IMR-90 (cell line): ENCODE measurements at regions of chr5 and their contacts with region 1.

Region 1: GRCh38 chr5:132369474-132370180 is at the start of gene SLC22A5:
- DNase-seq: peak; percentile 33
- ATAC-seq: peak; percentile 85
- H3K4me3 ChIP-seq: peak within 1 kb of the TSS; percentile 88
- H3K27ac ChIP-seq: peak within 1 kb of the TSS; percentile 54; the same call in 1 of the 2 replicates
- H3K4me1 ChIP-seq: peaks cover 11% of the 10 kb centered on the region
- H3K27me3 ChIP-seq: no peaks in the 10 kb centered on the region
- CTCF ChIP-seq: no peak
- POLR2A ChIP-seq: peak; percentile 50; the same call in 1 of the 2 replicates
- RAD21 ChIP-seq: no peak
- total RNA-seq, gene SLC22A5: 3.6 and 6.1 TPM in 2 replicates

Region 2: GRCh38 chr5:131877873-131878272 is 491.8 kb before region 1 on chr5:
- CTCF ChIA-PET with region 1: no interaction called
- POLR2A ChIA-PET with region 1: no interaction called
- dilution Hi-C with region 1: no loop called
- in situ Hi-C with region 1: no loop called
- intact Hi-C with region 1: no loop called
- DNase-seq: no peak
- ATAC-seq: no peak
- H3K4me3 ChIP-seq: no peak overlapping the region
- H3K27ac ChIP-seq: no peak overlapping the region
- H3K4me1 ChIP-seq: no peaks in the 10 kb centered on the region
- H3K27me3 ChIP-seq: no peaks in the 10 kb centered on the region
- CTCF ChIP-seq: no peak
- POLR2A ChIP-seq: no peak
- RAD21 ChIP-seq: no peak

Region 3: GRCh38 chr5:132074772-132075718 is 294.6 kb before region 1 on chr5:
- CTCF ChIA-PET with region 1: no interaction called
- POLR2A ChIA-PET with region 1: no interaction called
- dilution Hi-C with region 1: no loop called
- in situ Hi-C with region 1: no loop called
- intact Hi-C with region 1: no loop called
- DNase-seq: no peak
- ATAC-seq: no peak
- H3K4me3 ChIP-seq: no peak overlapping the region
- H3K27ac ChIP-seq: no peak overlapping the region
- H3K4me1 ChIP-seq: peaks cover 10% of the 10 kb centered on the region
- H3K27me3 ChIP-seq: no peaks in the 10 kb centered on the region
- CTCF ChIP-seq: no peak
- POLR2A ChIP-seq: no peak
- RAD21 ChIP-seq: no peak

Region 4: GRCh38 chr5:132180134-132180745 is 189.4 kb before region 1 on chr5:
- CTCF ChIA-PET with region 1: interaction called, 3 read pairs
- POLR2A ChIA-PET with region 1: no interaction called
- dilution Hi-C with region 1: no loop called
- in situ Hi-C with region 1: no loop called
- intact Hi-C with region 1: loop called (anchors 5 kb)
- DNase-seq: peak; percentile 74
- ATAC-seq: peak; percentile 75
- H3K4me3 ChIP-seq: no peak overlapping the region
- H3K27ac ChIP-seq: no peak overlapping the region
- H3K4me1 ChIP-seq: peaks cover 2% of the 10 kb centered on the region; the same call in 1 of the 2 replicates
- H3K27me3 ChIP-seq: no peaks in the 10 kb centered on the region
- CTCF ChIP-seq: peak; percentile 88
- POLR2A ChIP-seq: no peak
- RAD21 ChIP-seq: peak; percentile 72

Region 5: DNA sequence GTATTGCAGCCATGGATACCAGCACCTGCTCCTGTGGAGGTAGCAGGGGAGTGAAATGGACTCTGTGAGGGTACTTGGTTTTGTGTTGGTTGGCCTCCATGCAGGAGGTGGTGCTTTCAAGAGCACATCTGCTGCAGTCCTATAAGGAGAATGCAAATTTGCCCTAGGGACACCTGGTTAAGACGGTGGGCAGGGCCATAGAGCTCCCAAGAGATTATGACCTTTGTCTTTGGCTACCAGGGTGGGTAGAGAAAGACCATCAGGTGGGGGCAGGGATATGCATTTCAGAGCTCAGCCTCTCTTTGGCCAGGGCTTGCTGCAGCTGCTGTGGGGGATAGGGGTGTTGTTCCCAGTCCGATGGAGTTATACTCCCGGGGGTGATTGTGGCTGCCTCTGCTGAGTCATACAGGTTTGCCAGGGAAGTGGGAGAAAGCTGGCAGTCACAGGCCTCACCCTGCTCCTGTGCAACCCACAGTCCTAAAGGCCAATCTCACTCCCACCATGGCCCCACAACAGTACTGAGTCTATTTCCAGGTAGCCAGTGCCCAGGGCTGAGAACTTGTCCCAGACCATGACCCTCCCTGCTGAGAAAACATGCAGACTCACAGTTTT is 126.2 kb before region 1 on chr5:
- CTCF ChIA-PET with region 1: no interaction called
- POLR2A ChIA-PET with region 1: no interaction called
- dilution Hi-C with region 1: no loop called
- in situ Hi-C with region 1: no loop called
- intact Hi-C with region 1: loop called (anchors 5 kb)
- DNase-seq: no peak
- ATAC-seq: no peak
- H3K4me3 ChIP-seq: no peak overlapping the region
- H3K27ac ChIP-seq: no peak overlapping the region
- H3K4me1 ChIP-seq: no peaks in the 10 kb centered on the region
- H3K27me3 ChIP-seq: no peaks in the 10 kb centered on the region; the same call in 1 of the 2 replicates
- CTCF ChIP-seq: no peak
- POLR2A ChIP-seq: no peak
- RAD21 ChIP-seq: no peak

Region 6: DNA sequence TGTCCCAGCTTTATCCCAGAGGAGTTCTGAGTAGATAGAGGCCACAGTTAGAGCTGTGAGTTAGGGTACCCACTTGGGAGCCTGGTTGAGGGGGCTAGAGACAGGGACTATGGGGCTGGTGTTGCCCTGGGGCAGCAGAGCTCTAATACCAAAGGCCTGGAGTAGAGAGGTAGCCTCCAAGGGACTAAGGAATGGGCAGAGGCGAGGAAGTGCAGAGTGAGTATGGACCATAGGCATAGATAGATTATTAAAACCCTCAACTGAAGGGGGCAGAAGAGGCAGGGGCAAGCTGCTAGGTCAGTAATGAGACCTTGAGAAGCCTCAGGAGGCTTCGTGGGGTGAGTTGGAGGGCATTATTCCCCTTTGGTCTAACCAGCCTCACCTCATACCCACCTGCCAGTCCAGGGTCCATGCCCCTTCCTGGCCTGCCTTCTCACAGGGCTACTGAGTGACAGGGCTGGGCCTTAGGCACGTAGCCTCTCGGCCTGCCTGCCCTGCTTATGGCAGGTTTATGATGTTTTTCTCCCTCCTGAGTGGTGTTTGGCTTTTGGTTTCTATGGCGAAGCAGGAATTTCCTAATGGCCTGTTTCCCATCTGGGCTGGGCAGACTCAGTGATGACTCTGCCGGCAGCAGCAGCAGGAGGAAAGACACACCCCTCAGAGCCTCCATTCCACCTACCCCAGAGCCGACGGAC is 104.1 kb before region 1 on chr5:
- CTCF ChIA-PET with region 1: no interaction called
- POLR2A ChIA-PET with region 1: no interaction called
- dilution Hi-C with region 1: no loop called
- in situ Hi-C with region 1: no loop called
- intact Hi-C with region 1: loop called (anchors 2 kb)
- DNase-seq: peak; percentile 96
- ATAC-seq: peak; percentile 77
- H3K4me3 ChIP-seq: no peak overlapping the region
- H3K27ac ChIP-seq: peak overlapping the region; percentile 42; the same call in 1 of the 2 replicates
- H3K4me1 ChIP-seq: peaks cover 69% of the 10 kb centered on the region
- H3K27me3 ChIP-seq: no peaks in the 10 kb centered on the region
- CTCF ChIP-seq: no peak; the same call in 1 of the 2 replicates
- POLR2A ChIP-seq: peak; percentile 76
- RAD21 ChIP-seq: no peak; the same call in 1 of the 2 replicates

Region 7: GRCh38 chr5:132313366-132313765 is 56.3 kb before region 1 on chr5:
- CTCF ChIA-PET with region 1: no interaction called
- POLR2A ChIA-PET with region 1: no interaction called
- dilution Hi-C with region 1: no loop called
- in situ Hi-C with region 1: no loop called
- intact Hi-C with region 1: no loop called
- DNase-seq: peak; percentile 61
- ATAC-seq: no peak
- H3K4me3 ChIP-seq: no peak overlapping the region
- H3K27ac ChIP-seq: no peak overlapping the region
- H3K4me1 ChIP-seq: peaks cover under 1% of the 10 kb centered on the region; the same call in 1 of the 2 replicates
- H3K27me3 ChIP-seq: no peaks in the 10 kb centered on the region
- CTCF ChIP-seq: no peak
- POLR2A ChIP-seq: no peak
- RAD21 ChIP-seq: no peak

Region 8: DNA sequence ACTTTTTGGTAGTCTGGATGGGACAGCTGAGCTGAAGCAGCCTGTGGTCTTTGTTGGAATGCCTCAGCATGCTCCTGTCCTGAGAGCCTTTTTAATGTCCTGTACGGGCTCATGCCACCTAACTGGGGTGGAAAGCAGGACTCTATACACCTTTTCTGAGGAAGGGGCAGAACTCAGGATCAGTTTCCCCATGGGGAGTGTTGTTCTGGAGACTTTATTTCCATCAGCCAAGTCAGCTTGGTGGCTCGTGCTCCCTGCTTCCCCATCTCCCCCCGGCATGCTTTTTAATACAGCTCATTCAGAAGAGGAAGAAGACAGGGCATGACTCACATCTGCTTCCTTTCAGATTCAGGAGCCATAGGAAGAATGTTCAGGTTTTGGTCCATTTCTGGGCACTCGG is 412.5 kb after region 1 on chr5:
- CTCF ChIA-PET with region 1: no interaction called
- POLR2A ChIA-PET with region 1: no interaction called
- dilution Hi-C with region 1: no loop called
- in situ Hi-C with region 1: no loop called
- intact Hi-C with region 1: no loop called
- DNase-seq: peak; percentile 74
- ATAC-seq: peak; percentile 60
- H3K4me3 ChIP-seq: no peak overlapping the region
- H3K27ac ChIP-seq: peak overlapping the region; percentile 62; the same call in 1 of the 2 replicates
- H3K4me1 ChIP-seq: peaks cover 15% of the 10 kb centered on the region
- H3K27me3 ChIP-seq: no peaks in the 10 kb centered on the region
- CTCF ChIP-seq: no peak
- POLR2A ChIP-seq: no peak
- RAD21 ChIP-seq: no peak